HEK293T (cell line): ENCODE measurements at regions of chr16 and their contacts with region 1.

Region 1: DNA sequence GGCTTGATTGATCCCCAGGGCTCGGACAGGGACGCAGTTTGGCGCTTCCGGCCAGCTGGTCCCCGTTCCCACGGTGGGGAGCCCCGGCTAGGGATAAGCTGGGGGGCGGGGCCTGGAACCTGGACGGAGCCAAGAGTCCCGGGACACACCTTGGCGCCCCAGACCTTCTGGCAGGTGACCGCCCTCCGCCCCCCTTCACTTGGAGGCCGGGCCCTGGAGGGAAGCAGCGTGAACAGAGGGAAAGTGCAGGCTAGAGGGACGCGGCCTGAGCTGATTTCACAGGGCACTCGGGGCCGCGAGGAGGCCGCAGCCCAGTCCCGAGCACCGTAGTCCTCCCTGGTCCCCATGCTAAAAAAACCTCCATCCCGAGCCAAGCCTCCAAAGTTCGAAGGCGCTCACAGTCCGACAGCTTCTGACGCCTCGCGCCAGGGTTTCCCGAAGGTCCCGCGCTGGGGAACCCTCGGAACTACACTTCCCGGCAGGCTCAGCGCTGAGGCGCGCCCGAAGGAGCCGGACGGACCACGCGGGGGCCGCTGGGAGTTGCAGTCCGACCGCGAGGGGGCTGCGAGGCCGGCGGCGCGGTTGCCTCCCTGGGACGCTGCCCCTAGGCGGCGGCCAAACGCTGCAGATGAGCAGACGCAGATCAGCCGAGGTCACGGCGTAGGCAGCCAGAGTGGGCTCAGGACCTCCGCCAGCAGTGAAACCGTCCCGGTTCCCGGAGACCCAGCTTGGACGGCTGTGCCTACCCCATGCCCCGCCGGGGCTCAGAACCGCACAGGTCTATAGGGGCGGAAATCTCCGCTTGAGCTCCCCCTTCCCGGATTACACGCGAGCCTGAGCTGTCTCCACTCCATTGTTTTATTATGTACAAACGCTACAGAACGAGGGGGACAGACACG is at the start of gene TBX6:
- DNase-seq: peak; percentile 97

Region 2: DNA sequence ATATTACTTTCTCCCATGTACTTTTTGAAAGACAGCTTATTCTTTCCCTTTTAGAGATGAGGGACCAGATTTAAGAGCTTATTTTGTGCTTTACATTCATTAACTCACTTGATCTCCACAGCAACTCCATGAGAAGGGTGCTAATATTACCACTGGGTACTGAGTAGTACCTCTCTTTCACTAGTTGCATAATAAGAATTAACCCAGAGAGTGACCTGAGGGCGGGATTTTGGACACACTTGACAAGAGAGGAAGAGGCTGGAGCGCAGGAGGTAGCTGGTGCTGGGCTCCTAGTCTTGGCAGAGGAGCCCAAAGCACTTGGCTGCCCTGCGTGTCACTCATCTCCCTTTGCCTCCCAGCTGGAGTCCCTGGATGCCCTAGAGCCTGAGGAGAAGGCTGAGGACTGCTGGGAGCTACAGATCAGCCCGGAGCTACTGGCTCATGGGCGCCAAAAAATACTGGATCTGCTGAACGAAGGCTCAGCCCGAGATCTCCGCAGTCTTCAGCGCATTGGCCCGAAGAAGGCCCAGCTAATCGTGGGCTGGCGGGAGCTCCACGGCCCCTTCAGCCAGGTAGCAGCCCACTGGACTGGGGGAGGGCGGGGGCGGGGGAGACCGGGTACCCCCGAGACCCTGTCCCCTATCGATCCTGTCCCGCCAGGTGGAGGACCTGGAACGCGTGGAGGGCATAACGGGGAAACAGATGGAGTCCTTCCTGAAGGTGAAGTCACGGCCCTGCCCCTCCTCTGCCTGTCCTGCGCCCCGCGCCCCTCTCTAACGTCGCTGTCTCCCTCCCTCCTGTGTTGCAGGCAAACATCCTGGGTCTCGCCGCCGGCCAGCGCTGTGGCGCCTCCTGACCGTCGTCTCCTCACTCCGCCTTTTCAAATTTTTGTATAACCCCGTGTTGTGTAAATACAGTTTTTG is 287.0 kb before region 1 on chr16:
- CTCF ChIA-PET with region 1: no interaction called
- POLR2A ChIA-PET with region 1: no interaction called
- DNase-seq: no peak

Region 3: DNA sequence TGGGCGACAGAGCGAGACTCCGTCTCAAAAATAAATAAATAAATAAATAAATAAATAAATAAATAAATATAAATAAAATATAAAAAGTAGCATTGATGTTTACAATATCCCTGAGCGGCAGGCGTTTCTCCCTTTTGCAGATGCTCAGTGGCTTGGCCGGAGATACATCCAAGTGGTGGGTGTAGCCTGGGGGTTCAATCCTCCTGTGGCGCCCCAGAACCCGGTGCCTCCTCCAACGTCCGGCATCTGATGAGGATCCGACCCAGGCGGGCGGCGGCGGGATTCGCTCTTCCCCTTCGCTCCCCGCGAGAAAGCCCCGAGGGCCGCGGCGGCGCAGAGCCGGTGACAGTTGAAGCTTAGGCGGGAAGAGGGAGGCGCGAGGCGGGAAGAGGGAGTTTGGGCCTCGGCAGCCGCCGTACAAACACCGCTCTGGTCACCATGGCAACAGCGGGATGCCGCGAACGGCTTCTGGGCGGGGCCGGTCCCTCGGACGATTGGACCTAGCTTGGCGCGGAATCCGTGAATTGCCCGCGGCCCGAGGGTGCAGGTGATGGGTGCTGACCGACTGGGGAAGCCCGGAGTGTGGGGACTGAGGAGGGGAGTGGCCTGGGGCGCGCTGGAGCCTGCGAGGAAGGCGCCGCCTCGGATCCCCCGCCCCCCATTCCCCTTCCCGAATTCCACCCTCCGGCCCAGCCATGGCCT is 38.9 kb before region 1 on chr16:
- CTCF ChIA-PET with region 1: interaction called, 15 read pairs
- POLR2A ChIA-PET with region 1: interaction called, 12 read pairs
- DNase-seq: peak; percentile 99

Region 4: DNA sequence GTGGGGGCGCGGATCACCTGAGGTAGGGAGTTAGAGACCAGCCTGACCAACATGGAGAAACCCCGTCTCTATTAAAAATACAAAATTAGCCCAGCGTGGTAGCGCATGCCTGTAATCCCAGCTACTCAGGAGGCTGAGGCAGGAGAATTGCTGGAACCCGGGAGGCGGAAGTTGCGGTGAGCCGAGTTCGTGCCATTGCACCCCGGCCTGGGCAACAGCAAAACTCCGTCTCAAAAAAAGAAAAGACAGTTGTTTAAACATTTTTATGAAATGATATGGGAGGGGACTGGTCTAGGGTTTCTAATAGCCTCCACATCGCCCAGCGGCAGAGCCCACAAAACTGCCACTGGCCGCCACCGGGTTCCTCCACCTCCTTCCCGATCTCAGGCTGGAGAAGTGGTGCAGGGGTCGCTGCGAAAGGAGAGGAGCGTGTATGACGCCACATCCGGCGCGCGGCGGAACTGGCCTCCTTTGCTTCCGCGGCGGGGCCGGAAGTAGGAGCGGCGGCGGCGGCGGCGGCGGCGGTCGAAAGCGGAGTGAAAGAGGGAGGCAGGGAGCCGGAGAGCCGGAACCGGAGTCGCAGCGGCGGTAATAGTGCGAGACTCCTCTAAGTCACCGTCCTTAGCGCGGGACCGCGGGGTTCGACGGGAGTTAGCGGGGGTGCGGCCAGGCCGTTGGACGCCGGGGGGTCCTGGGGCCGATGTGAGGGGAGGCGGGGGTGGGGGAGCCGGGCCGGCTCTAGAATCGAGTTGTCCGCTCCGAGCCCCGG is 16.0 kb before region 1 on chr16 and contains the start of gene PPP4C:
- CTCF ChIA-PET with region 1: interaction called, 25 read pairs
- POLR2A ChIA-PET with region 1: interaction called, 66 read pairs
- DNase-seq: peak; percentile 99

Region 5: DNA sequence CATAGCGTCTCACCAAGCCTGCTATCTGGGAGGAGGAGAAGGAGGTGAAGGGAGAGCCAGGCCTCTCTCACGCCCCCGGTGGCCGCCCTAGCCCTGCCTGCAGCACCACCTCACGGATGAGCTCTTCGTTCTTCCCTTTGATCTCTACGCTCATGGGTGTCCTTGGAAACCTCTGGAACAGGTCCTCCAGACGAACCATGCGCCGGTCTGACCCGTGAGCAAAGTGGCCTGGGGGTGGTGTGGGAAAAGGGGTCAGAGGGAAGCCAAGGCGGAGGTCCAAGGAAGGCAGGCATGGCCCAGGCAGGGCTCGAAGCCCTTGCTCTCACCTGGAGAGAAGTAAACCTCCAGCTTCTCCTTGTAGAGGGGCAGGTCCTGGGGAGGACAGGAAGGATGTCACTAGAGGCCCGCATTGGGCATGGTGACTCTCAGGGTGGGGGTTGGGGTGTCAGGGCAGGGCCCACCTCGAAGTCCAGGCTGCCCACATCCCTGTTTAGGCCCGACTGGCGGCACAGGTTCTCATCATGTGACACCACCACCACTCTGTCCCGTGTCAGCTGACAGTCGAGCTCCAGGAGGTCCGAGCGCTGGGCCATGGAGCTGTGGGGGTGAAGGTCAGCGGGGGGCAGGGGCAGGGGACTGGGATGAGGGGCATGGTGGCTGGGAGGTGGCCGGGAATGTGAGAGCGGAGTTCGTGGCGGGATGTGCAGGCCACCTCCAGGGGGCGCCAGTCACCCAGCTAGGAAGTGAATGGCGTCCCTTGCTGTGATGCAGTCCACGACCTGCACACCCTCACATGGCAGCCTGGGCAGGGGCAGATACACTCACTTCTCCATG is 20.7 kb after region 1 on chr16:
- CTCF ChIA-PET with region 1: interaction called, 36 read pairs
- POLR2A ChIA-PET with region 1: interaction called, 15 read pairs
- DNase-seq: peak; percentile 95

Region 6: GRCh38 chr16:30370444-30371247 is 278.9 kb after region 1 on chr16 and contains the start of gene TBC1D10B:
- CTCF ChIA-PET with region 1: interaction called, 5 read pairs
- POLR2A ChIA-PET with region 1: interaction called, 12 read pairs
- DNase-seq: peak; percentile 98